Activated T-helper 1 cell treated with anti-CD3 and anti-CD28 coated beads, Interleukin-12 subunit alpha, Interleukin-12 subunit beta, Interleukin-2, Interleukin-4 antibody, amounts not matched to agents 30 ng/mL and 10 ng/mL and 1 ng/mL, durations not matched to agents 14 hours and 24 hours and 36 hours (primary cell): ENCODE measurements at regions of chr7 and their contacts with region 1.

Region 1: GRCh38 chr7:108669958-108670357 is 100.3 kb downstream of the DNAJB9 start:
- DNase-seq: no peak
- H3K4me3 Mint-ChIP-seq: no peak overlapping the region
- H3K27ac Mint-ChIP-seq: no peak overlapping the region
- H3K4me1 Mint-ChIP-seq: no peaks in the 10 kb centered on the region
- H3K27me3 Mint-ChIP-seq: no peaks in the 10 kb centered on the region

Region 2: GRCh38 chr7:108280136-108280535 is 389.8 kb before region 1 on chr7:
- intact Hi-C with region 1: no loop called
- DNase-seq: no peak
- H3K4me3 Mint-ChIP-seq: no peak overlapping the region
- H3K27ac Mint-ChIP-seq: no peak overlapping the region
- H3K4me1 Mint-ChIP-seq: peaks cover 9% of the 10 kb centered on the region
- H3K27me3 Mint-ChIP-seq: peaks cover 5% of the 10 kb centered on the region

Region 3: DNA sequence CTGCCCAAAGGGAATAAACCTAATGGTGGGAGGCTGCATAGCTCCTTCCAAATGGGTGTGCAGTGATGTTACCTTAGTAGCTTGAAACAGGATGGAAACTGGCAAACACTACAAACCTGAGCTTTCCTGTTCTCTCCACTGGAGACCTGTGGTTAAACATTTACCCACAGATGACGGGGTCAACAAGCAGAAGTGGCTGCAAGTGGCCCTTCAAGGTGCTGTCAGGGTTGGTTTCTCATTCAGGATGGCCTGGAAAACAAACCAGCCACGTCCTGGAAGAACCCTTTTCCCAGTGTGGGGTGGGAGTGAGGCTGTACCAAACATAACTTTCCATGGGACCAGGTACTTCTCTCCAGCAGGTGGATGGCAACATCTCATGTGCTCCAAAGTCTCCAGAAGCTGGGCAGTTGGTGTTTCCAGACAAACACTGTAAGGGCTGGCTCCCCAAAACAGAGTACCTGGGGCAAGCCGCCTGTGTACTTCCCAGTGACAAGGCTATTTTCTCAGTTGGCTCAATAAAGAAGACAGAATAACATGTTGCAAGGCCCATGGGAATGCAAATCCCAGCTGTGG is 32.8 kb before region 1 on chr7:
- intact Hi-C with region 1: loop called (anchors 1 kb)
- DNase-seq: no peak
- H3K4me3 Mint-ChIP-seq: no peak overlapping the region
- H3K27ac Mint-ChIP-seq: no peak overlapping the region
- H3K4me1 Mint-ChIP-seq: no peaks in the 10 kb centered on the region
- H3K27me3 Mint-ChIP-seq: peaks cover 2% of the 10 kb centered on the region